ENCODE measurements at regions of chr14 and their contacts with region 1.

Region 1: GRCh38 chr14:84254290-84254689 is 1275.7 kb upstream of the FLRT2 start:
- DNase-seq: peak; percentile 96
- H3K4me3 ChIP-seq: peak overlapping the region in 1 of 3 experiments; percentile 32
- H3K27ac ChIP-seq: peak overlapping the region; percentile 87
- H3K4me1 ChIP-seq: peaks cover 55% of the 10 kb centered on the region
- H3K27me3 ChIP-seq: no peaks in the 10 kb centered on the region
- CTCF ChIP-seq: no peak
- POLR2A ChIP-seq: peak; percentile 58

Region 2: DNA sequence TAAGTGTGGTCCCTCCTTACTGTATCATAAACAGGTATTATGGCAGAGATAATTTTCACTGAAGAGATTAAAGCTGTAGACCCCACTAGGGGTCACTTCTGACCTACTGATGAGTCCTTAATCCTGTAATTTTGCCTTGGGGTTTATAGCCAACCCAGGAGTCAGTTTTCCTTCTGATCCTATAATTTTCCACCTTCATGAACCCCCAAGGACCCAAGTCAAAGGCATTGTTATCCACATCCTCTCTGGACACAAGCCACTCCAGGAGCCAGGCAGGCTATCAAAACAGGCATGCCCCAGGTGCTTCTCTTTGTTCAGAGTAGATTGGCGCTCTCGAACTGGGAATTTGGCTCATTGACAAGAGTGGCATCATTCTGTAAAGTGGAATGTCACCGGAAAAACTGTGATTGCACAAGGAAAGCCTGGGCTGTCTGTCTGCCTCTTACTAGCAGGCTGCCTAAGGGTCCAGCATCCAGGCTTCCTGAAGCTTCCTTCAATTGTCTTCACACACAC is 247.6 kb before region 1 on chr14:
- CTCF ChIA-PET with region 1: interaction called, 5 read pairs
- POLR2A ChIA-PET with region 1: interaction called, 3 read pairs
- dilution Hi-C with region 1: no loop called
- intact Hi-C with region 1: loop called (anchors 1 kb)
- DNase-seq: peak; percentile 96
- H3K4me3 ChIP-seq: no peak overlapping the region
- H3K27ac ChIP-seq: peak overlapping the region; percentile 61
- H3K4me1 ChIP-seq: peaks cover 10% of the 10 kb centered on the region
- H3K27me3 ChIP-seq: no peaks in the 10 kb centered on the region
- CTCF ChIP-seq: peak; percentile 10 to 11
- POLR2A ChIP-seq: no peak

Region 3: GRCh38 chr14:84144166-84144565 is 110.1 kb before region 1 on chr14:
- CTCF ChIA-PET with region 1: no interaction called
- POLR2A ChIA-PET with region 1: no interaction called
- dilution Hi-C with region 1: no loop called
- intact Hi-C with region 1: loop called (anchors 2 kb)
- DNase-seq: peak; percentile 58
- H3K4me3 ChIP-seq: no peak overlapping the region
- H3K27ac ChIP-seq: no peak overlapping the region
- H3K4me1 ChIP-seq: peaks cover 9% of the 10 kb centered on the region
- H3K27me3 ChIP-seq: no peaks in the 10 kb centered on the region
- CTCF ChIP-seq: no peak
- POLR2A ChIP-seq: no peak

Region 4: DNA sequence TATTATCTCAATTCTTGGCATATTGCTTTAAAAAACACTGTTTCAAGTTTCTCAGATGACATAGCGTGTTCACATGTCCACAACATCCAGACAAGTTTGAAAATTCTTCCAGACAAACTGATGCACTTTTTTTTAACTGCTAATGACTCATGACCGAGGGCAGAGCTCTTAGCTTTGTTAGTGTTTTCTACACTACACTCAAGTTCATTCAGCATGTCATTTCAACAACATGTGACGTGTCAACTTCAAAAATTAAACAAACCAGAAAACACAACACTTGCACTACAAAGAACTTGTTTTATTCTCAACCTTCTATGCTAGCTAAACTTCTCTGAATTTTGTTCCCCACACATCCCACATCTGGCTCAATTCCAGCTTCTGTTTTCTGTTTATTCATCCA is 89.4 kb after region 1 on chr14:
- CTCF ChIA-PET with region 1: no interaction called
- POLR2A ChIA-PET with region 1: no interaction called
- dilution Hi-C with region 1: no loop called
- intact Hi-C with region 1: loop called (anchors 1 kb)
- DNase-seq: peak; percentile 92
- H3K4me3 ChIP-seq: no peak overlapping the region
- H3K27ac ChIP-seq: peak overlapping the region; percentile 58
- H3K4me1 ChIP-seq: peaks cover 21% of the 10 kb centered on the region
- H3K27me3 ChIP-seq: no peaks in the 10 kb centered on the region
- CTCF ChIP-seq: no peak
- POLR2A ChIP-seq: no peak

Region 5: GRCh38 chr14:84806627-84807026 is 552.3 kb after region 1 on chr14:
- CTCF ChIA-PET with region 1: no interaction called
- POLR2A ChIA-PET with region 1: no interaction called
- dilution Hi-C with region 1: no loop called
- intact Hi-C with region 1: loop called (anchors 5 kb)
- DNase-seq: peak; percentile 47
- H3K4me3 ChIP-seq: no peak overlapping the region
- H3K27ac ChIP-seq: peak overlapping the region; percentile 66
- H3K4me1 ChIP-seq: peaks cover 10% of the 10 kb centered on the region
- H3K27me3 ChIP-seq: no peaks in the 10 kb centered on the region
- CTCF ChIP-seq: no peak
- POLR2A ChIP-seq: no peak

Region 6: DNA sequence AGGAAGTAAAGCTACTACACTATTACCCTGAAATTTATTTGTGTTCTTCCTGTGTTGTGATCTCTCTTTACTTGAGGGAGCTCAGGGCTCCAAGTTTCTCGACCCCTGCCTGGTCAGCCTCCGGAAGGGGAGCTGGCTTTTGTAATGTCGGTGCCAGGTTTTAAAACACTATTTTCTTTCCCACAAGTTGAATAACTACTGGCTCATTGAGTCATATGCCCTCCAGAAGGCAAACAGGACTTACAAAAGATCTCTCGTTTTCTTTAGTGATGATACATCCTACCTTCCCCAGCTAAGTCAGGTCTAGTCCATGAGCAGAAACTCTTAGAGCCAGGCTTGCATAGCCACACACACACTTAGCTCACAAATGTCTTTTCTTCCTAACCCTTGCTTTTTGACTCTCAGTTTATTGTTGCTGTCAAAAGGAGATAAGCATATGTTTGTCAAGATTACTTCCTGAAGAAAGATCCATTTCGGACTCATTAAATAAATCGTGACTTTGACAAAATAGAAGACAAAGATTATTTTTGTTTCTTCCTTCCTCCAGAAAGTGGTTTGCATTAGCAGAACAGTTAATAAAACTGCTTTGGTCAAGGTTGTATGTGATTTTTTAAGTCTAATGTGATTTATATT is 1065.8 kb after region 1 on chr14:
- CTCF ChIA-PET with region 1: no interaction called
- POLR2A ChIA-PET with region 1: no interaction called
- dilution Hi-C with region 1: no loop called
- intact Hi-C with region 1: loop called (anchors 5 kb)
- DNase-seq: peak; percentile 95
- H3K4me3 ChIP-seq: peak overlapping the region in 1 of 3 experiments; percentile 35
- H3K27ac ChIP-seq: peak overlapping the region; percentile 68
- H3K4me1 ChIP-seq: peaks cover 25% of the 10 kb centered on the region
- H3K27me3 ChIP-seq: no peaks in the 10 kb centered on the region
- CTCF ChIP-seq: no peak
- POLR2A ChIP-seq: peak; percentile 35

Region 7: GRCh38 chr14:85535991-85536832 is 1281.9 kb after region 1 on chr14:
- CTCF ChIA-PET with region 1: interaction called, 5 read pairs
- POLR2A ChIA-PET with region 1: interaction called, 24 read pairs
- dilution Hi-C with region 1: no loop called
- intact Hi-C with region 1: loop called (anchors 1 kb)
- DNase-seq: peak; percentile 80
- H3K4me3 ChIP-seq: peak overlapping the region; percentile 12 to 94 (median 93)
- H3K27ac ChIP-seq: peak overlapping the region; percentile 59
- H3K4me1 ChIP-seq: peaks cover 31% of the 10 kb centered on the region
- H3K27me3 ChIP-seq: no peaks in the 10 kb centered on the region
- CTCF ChIP-seq: peak; percentile 17 to 27
- POLR2A ChIP-seq: no peak

Measured in endothelial cell of umbilical vein (primary cell).